ENCODE measurements at regions of chr13 and their contacts with region 1.

Region 1: DNA sequence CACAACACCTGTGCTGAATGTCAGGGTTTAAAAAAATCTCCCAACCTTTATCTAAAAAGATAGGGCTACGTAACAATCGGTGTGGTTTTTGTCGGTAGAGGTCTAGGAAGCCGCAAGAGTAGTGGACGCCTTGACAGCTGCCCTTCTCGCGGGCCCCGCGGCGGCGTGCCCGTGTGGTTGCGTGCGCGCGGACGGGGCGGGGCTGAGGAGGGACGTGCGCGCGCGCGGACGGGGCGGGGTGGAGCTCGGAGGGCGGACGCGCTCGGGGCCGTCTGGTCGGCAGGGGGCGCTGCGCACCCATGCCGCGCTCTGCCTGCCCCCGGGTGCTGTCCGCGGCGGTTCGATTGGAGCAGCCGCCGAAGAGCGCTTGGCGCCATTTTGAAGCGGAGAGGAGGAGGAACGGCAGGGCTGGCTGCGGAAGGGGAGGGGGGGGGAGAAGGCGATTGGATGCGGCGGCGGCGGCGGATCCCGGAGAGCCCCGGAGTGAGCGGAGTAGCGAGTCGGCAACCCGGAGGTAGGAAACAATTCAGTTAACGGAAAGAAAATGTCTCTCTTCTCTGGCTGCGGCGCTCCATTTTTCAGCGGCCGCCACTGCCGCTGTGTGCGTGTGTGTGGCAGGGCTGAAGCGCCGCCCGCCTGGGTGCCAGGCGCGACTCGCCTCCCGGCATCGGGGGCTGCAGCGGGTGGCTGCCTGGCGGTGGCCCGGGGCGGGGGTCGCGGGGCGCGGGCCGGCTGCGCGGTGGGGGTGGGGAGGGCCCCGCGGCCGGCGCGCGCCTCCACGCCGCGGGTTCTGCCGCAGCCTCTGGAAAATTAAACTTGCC is at the start of gene PDS5B:
- DNase-seq: peak; percentile 77 to 97
- H3K4me3 ChIP-seq: peak within 1 kb of the TSS; percentile 88 to 96
- H3K27ac ChIP-seq: peak within 1 kb of the TSS; percentile 86 to 98
- H3K4me1 ChIP-seq: peaks cover 0 to 18% of the 10 kb centered on the region in 2 donors
- H3K27me3 ChIP-seq: no peaks in the 10 kb centered on the region
- CTCF ChIP-seq: peak; percentile 57 to 99 (median 69)
- total RNA-seq, gene PDS5B: 31.0 TPM

Region 2: DNA sequence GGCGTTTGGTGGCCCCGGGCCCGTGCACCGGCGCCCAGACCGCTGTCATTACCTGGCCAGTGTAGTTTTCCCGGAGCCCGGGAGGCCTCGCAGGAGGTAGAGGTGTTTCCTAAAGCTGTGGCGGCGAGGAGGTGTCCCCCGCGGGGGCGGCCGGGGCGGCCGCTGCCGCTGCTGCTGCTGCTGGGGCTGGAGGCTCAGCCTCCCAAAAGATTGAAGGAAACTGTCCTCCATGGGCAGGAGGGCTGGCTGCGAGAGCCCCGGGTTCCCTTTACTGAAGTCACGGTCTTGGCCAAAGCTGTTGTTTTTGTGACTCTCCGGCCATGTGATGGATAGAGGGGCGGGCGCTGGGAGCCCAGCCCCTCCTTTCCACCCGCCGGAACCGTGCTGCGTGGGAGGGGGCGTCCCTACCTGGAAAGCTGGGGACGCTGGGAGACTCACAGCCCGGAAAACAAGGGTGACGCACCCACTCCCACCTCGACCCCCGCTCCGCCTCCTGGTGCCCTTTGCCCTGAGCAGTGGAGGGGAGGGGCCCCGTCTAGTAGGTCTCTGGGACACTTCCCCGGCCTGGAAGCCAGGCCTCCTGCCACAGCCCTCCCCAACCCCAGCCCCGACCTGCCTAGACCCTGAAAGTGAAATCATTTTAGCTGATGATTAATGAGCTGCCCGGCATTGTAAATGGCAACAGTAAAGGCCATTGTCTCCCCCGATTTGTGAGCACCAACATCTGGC is 158.3 kb before region 1 on chr13 and contains the start of gene N4BP2L1:
- intact Hi-C with region 1: loop called (anchors 5 kb)
- DNase-seq: peak; percentile 76 to 92
- H3K4me3 ChIP-seq: peak within 1 kb of the TSS; percentile 86 to 99
- H3K27ac ChIP-seq: peak within 1 kb of the TSS; percentile 90 to 99
- H3K4me1 ChIP-seq: peaks cover 0 to 18% of the 10 kb centered on the region in 2 donors
- H3K27me3 ChIP-seq: no peaks in the 10 kb centered on the region
- CTCF ChIP-seq: no peak
- total RNA-seq, gene N4BP2L1: 27.2 TPM

Region 3: GRCh38 chr13:32639502-32640105 is 53.3 kb after region 1 on chr13:
- intact Hi-C with region 1: loop called (anchors 1 kb)
- DNase-seq: peak in 1 of 2 donors; percentile 80
- H3K4me3 ChIP-seq: no peak overlapping the region
- H3K27ac ChIP-seq: no peak overlapping the region
- H3K4me1 ChIP-seq: peaks cover 0 to 3% of the 10 kb centered on the region in 2 donors
- H3K27me3 ChIP-seq: no peaks in the 10 kb centered on the region
- CTCF ChIP-seq: peak; percentile 57 to 84 (median 69)

Region 4: DNA sequence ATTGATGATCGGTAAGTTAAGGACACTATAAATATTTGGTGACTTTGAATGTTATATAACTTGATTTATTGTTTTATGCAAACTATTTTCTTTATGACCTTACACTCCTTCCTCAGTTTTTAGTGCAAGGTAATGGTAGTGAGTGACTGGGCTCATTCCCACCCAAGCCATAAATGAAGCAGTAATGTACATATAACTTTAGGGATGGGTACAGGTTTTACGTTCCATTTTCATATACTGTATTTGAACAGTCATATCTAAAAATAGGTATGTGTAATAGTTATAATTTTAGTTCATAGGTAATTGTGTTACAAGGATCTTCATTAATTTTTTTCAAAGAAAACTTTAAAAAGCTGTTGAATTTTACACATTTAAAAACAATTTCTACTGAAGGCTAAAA is 101.0 kb after region 1 on chr13:
- intact Hi-C with region 1: no loop called
- DNase-seq: no peak
- H3K4me3 ChIP-seq: no peak overlapping the region
- H3K27ac ChIP-seq: no peak overlapping the region
- H3K4me1 ChIP-seq: no peaks in the 10 kb centered on the region
- H3K27me3 ChIP-seq: no peaks in the 10 kb centered on the region
- CTCF ChIP-seq: no peak

Region 5: DNA sequence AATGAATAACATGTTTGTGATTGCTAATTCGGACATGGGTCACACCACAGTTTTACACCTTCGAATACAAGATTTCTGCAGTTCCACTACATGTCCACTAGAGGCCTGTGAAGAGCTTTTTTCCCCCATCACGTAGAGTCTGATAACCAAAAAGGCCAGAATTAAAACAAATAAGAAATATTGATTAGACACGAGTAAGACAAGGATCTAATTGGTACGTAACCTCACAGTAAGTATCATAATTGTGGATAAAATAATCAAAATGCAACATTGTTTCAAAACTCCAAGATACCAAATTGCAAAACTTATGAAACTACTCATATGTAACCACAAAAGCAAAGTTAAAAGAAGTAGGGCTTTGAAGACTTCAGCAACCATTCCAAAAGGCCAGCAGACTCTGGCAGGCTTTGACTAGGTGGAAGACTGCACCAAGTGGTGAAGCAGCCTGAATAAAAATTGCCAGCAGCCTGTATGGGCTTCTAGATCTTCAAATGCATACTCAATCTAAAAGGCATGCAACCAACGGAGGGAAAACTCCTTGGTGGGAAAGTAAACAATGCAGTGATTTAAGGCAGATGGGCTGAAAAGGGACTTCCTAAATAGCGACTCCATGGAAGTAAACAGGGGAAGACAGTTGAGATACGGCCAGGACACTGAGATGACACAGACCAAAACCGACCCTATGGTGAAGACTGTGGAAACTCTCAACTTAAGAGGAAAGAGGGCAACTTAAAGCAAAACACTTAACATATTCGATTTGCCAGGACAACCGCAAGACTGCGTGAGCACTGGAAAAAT is 642.6 kb after region 1 on chr13:
- intact Hi-C with region 1: loop called (anchors 10 kb)
- DNase-seq: no peak
- H3K4me3 ChIP-seq: no peak overlapping the region
- H3K27ac ChIP-seq: no peak overlapping the region
- H3K4me1 ChIP-seq: peaks cover 0 to 19% of the 10 kb centered on the region in 2 donors
- H3K27me3 ChIP-seq: no peaks in the 10 kb centered on the region
- CTCF ChIP-seq: peak; percentile 74 to 91 (median 85)

Region 6: GRCh38 chr13:33723772-33724435 is 1137.6 kb after region 1 on chr13:
- intact Hi-C with region 1: loop called (anchors 5 kb)
- DNase-seq: peak; percentile 22 to 89
- H3K4me3 ChIP-seq: no peak overlapping the region
- H3K27ac ChIP-seq: peak overlapping the region; percentile 61 to 64
- H3K4me1 ChIP-seq: peaks cover 10 to 11% of the 10 kb centered on the region in 2 donors
- H3K27me3 ChIP-seq: no peaks in the 10 kb centered on the region
- CTCF ChIP-seq: peak; percentile 60 to 78 (median 67)